Esophagus muscularis mucosa (tissue), 4 donors: ENCODE measurements at regions of chr20 and their contacts with region 1.

Region 1: DNA sequence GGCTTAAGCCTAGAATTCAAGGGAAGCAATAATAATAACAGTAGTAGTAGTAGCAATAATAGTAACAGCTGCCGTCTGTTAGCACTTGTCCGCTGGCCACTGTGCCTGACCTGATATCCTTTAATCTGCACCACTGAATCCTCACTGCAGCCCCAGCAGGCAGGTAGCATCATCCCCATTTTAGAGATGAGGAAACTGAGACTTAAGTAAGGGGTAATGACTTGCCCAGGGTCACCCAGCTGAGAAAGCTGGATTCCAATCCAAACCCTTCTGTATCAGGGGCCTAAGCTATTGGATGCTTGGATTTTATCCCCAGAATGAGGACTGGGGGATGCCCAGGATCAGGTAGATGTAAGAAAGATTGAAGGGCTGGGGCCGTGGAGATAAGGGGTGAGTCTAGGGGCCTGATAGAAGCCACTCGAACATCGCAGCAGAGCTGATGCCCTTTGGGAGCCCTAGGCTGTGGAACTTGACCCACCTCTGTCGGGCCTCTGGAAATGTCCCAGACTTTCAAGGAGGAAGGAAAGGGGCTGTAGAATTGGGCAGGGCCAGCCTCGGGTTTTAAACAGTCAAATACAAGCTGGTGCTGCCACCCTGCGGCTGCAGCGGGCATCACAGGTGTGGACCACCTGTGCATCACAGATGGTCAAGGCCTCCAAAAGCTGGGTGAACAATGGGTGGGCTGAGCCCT is 102.1 kb upstream of the MYL9 start:
- DNase-seq: no peak
- H3K4me3 ChIP-seq: no peak overlapping the region
- H3K27ac ChIP-seq: no peak overlapping the region
- H3K4me1 ChIP-seq: peaks cover 0 to 18% (median 11%) of the 10 kb centered on the region in 4 donors
- H3K27me3 ChIP-seq: peaks cover 0 to 23% (median 5%) of the 10 kb centered on the region in 4 donors
- CTCF ChIP-seq: peak; percentile 79 to 94 (median 81)
- EP300 ChIP-seq: no peak
- POLR2A ChIP-seq: no peak

Region 2: DNA sequence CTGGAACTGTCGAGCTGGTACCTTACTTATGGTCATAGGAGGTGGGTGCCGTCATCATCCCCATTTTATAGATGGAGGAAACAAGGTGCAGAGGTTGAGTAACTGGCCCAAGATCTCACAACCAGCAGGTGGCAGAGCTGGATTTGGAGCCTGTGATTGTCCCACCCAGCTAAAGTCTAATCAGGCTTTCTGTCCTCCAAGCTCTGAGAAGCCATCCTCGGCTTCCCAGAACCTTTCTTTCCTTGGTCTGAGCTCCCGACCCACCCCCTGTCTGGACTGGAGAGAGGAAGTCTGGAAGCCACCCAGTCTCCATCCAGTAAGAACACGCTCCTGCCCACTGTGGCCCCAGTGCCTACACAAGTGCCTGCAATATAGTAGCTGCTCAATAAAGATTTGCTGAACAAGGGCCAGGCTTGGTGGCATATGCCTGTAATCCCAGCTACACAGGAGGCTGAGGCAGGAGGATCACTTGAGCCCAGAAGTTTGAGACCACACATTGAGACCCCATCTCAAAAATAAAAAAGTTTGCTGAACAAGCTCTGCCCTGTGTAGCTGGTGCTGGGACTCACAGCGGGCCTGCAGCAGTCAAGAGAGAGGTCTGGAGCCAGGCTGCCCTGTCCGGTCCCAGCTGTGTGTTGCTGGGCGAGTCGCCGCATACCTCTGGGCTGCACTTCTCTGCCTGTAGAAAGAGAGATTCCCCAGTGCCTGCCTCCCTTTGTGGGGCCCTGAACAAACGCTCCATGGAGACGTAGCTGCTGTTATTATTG is 165.6 kb before region 1 on chr20:
- intact Hi-C with region 1: loop called (anchors 2 kb)
- DNase-seq: no peak
- H3K4me3 ChIP-seq: no peak overlapping the region
- H3K27ac ChIP-seq: no peak overlapping the region
- H3K4me1 ChIP-seq: no peaks in the 10 kb centered on the region
- H3K27me3 ChIP-seq: peaks cover 0 to 36% (median 4%) of the 10 kb centered on the region in 4 donors
- CTCF ChIP-seq: peak in 2 of 3 experiments; percentile 9 to 16
- EP300 ChIP-seq: no peak
- POLR2A ChIP-seq: no peak

Region 3: GRCh38 chr20:36506253-36506652 is 67.1 kb after region 1 on chr20:
- intact Hi-C with region 1: no loop called
- DNase-seq: no peak
- H3K4me3 ChIP-seq: no peak overlapping the region
- H3K27ac ChIP-seq: no peak overlapping the region
- H3K4me1 ChIP-seq: peaks cover 0 to 17% (median 11%) of the 10 kb centered on the region in 4 donors
- H3K27me3 ChIP-seq: no peaks in the 10 kb centered on the region
- CTCF ChIP-seq: peak; percentile 35 to 50 (median 46)
- EP300 ChIP-seq: no peak
- POLR2A ChIP-seq: no peak